Adrenal gland (tissue), 19 donors: ENCODE measurements at regions of chr20 and their contacts with region 1.

Region 1: GRCh38 chr20:6828794-6829423 is 61.4 kb downstream of the BMP2 start:
- DNase-seq: peak; percentile 40 to 86 (median 69)
- H3K4me3 ChIP-seq: no peak overlapping the region
- H3K27ac ChIP-seq: no peak overlapping the region
- H3K4me1 ChIP-seq: no peaks in the 10 kb centered on the region
- H3K27me3 ChIP-seq: no peaks in the 10 kb centered on the region
- CTCF ChIP-seq: peak; percentile 36 to 76 (median 58)
- POLR2A ChIP-seq: no peak

Region 2: DNA sequence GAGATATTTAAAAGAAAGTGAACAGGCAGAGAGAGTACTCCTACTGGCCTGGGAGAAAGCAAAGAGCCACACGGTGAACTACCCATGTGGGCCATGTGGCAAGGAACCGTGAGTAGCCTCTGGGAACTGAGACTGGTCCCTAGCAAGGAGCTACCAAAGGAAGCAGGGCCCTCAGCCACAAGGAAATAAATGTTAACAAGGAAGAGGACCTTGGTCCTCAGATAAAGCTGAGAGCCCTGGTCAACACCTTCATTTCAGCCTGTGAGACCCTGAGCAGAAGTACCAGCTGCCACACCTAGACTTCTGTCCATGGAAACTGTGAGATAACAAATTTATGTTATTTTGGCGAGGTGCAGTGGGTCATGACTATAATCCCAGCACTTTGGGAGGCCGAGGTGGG is 36.1 kb before region 1 on chr20:
- intact Hi-C with region 1: no loop called
- DNase-seq: no peak
- H3K4me3 ChIP-seq: no peak overlapping the region
- H3K27ac ChIP-seq: no peak overlapping the region
- H3K4me1 ChIP-seq: no peaks in the 10 kb centered on the region
- H3K27me3 ChIP-seq: no peaks in the 10 kb centered on the region
- CTCF ChIP-seq: no peak
- POLR2A ChIP-seq: no peak

Region 3: GRCh38 chr20:6920991-6921613 is 92.2 kb after region 1 on chr20:
- intact Hi-C with region 1: no loop called
- DNase-seq: no peak
- H3K4me3 ChIP-seq: no peak overlapping the region
- H3K27ac ChIP-seq: no peak overlapping the region
- H3K4me1 ChIP-seq: no peaks in the 10 kb centered on the region
- H3K27me3 ChIP-seq: no peaks in the 10 kb centered on the region
- CTCF ChIP-seq: no peak
- POLR2A ChIP-seq: no peak

Region 4: DNA sequence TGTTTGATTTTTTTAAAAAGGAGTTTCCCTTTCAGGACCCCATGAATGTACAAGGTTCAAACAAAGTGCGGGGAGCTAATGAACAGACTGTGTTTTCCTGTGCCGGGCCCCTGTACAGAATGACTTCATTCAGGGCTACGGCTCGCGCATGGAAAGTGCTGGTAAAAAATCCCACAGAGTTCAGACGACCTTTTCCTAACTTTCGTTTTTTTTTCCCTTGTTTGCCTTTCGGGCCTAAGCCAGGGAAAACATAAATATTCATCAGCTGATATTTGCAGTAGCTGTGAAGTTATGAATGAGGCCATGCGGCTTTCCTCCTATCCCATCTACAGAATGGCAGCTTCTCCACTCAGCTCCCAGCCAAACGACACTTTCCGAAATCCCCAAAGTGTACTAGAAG is 1037.4 kb after region 1 on chr20:
- intact Hi-C with region 1: loop called in 1 of 2 experiments (anchors 10 kb)
- DNase-seq: no peak
- H3K4me3 ChIP-seq: no peak overlapping the region
- H3K27ac ChIP-seq: no peak overlapping the region
- H3K4me1 ChIP-seq: no peaks in the 10 kb centered on the region
- H3K27me3 ChIP-seq: no peaks in the 10 kb centered on the region
- CTCF ChIP-seq: no peak
- POLR2A ChIP-seq: no peak